AG04450 (cell line): ENCODE measurements at regions of chr7 and their contacts with region 1.

Region 1: GRCh38 chr7:139075031-139075652 is 34.4 kb downstream of the ZC3HAV1 start:
- DNase-seq: peak; percentile 65
- H3K4me3 ChIP-seq: no peak overlapping the region
- H3K27ac ChIP-seq: no peak overlapping the region
- H3K27me3 ChIP-seq: no peaks in the 10 kb centered on the region
- CTCF ChIP-seq: peak; percentile 76

Region 2: GRCh38 chr7:139016931-139017511 is 58.1 kb before region 1 on chr7:
- CTCF ChIA-PET with region 1: interaction called, 103 read pairs
- POLR2A ChIA-PET with region 1: no interaction called
- DNase-seq: peak; percentile 41
- H3K4me3 ChIP-seq: no peak overlapping the region
- H3K27ac ChIP-seq: no peak overlapping the region
- H3K27me3 ChIP-seq: no peaks in the 10 kb centered on the region
- CTCF ChIP-seq: peak; percentile 78

Region 3: GRCh38 chr7:139035586-139036353 is 39.4 kb before region 1 on chr7 and contains the start of gene ZC3HAV1L:
- CTCF ChIA-PET with region 1: interaction called, 13 read pairs
- POLR2A ChIA-PET with region 1: no interaction called
- DNase-seq: peak; percentile 20
- H3K4me3 ChIP-seq: peak within 1 kb of the TSS; percentile 75
- H3K27ac ChIP-seq: peak within 1 kb of the TSS; percentile 21
- H3K27me3 ChIP-seq: no peaks in the 10 kb centered on the region
- CTCF ChIP-seq: no peak
- polyA plus RNA-seq, gene ZC3HAV1L: 9.9 and 10.0 TPM in 2 replicates

Region 4: GRCh38 chr7:139058943-139059342 is 16.2 kb before region 1 on chr7:
- CTCF ChIA-PET with region 1: interaction called, 63 read pairs
- POLR2A ChIA-PET with region 1: no interaction called
- DNase-seq: no peak
- H3K4me3 ChIP-seq: no peak overlapping the region
- H3K27ac ChIP-seq: no peak overlapping the region
- H3K27me3 ChIP-seq: no peaks in the 10 kb centered on the region
- CTCF ChIP-seq: no peak

Region 5: GRCh38 chr7:139095194-139095659 is 20.1 kb after region 1 on chr7:
- CTCF ChIA-PET with region 1: interaction called, 24 read pairs
- POLR2A ChIA-PET with region 1: no interaction called
- DNase-seq: no peak
- H3K4me3 ChIP-seq: no peak overlapping the region
- H3K27ac ChIP-seq: no peak overlapping the region
- H3K27me3 ChIP-seq: no peaks in the 10 kb centered on the region
- CTCF ChIP-seq: no peak

Region 6: DNA sequence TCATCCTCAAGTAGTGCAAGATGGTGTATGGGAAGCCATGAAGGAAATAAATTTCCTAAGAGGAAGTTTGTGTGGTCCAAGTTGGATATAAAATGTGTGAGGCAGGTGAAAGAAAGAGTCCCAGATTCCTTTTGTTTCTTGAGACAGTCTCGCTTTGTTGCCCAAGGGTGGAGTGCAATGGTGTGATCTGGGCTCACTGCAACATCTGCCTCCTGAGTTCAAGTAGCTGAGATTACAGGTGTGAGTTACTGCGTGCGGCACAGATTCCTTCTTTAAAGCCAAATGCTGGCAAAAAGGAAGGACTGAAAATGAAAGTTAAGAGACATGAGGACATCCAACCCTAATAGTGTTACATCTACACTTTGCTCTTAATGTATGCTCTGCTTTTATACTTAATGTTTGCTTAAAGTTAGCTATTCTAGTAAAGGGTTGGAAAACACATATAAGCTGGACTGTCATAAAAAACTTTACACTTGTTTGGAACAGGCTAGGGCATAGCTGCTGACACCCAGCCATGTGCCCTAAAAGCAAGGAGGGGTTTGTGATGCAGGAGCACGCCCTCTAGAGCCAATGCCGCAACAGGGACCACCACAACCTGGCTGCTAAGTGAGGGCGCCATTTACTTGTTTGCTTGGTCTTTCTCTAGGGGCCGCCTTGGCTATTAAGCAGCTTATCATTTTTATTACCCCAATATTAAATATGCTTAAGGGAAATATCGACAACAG is 482.9 kb after region 1 on chr7:
- CTCF ChIA-PET with region 1: no interaction called
- POLR2A ChIA-PET with region 1: no interaction called
- DNase-seq: no peak
- H3K4me3 ChIP-seq: no peak overlapping the region
- H3K27ac ChIP-seq: no peak overlapping the region
- H3K27me3 ChIP-seq: peaks cover 2% of the 10 kb centered on the region
- CTCF ChIP-seq: no peak